Vagina (tissue), 2 donors: ENCODE measurements at regions of chr1 and their contacts with region 1.

Region 1: DNA sequence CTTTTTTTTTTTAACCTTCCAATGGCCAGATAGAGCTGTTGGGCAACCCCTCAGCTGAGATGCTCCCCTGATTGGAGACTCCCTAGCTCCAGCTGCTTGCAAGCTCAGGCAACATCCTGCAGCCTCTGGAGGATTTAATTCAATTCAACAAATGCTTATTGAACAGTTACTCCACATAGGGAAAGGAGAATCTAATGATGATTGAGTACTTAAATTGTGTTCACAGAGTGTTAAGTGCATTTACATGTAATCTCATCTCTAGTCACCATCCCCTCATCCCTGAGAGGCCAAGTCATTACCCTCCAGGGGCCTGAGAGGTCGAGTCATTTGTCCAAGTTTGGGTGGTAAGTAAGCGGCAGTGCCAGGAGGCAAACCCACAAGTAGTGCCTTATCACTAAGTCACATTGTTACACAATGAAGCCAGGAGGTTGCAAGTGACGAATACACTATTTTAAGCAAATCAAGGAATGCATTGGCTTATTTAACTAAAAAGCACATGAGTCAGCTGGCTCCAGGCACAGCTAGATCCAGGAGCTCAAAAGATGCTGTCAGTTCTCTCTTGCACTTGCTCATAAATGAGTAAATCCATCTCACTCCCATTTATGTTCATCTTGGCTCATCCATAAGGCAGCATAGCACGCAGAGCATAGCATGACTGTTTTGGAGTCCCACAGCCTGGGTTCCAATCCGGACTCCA is 64.3 kb downstream of the OPTC start:
- DNase-seq: peak in 1 of 2 donors; percentile 91
- H3K4me3 ChIP-seq: no peak overlapping the region
- H3K27ac ChIP-seq: peak overlapping the region; percentile 91
- H3K4me1 ChIP-seq: peaks cover 56% of the 10 kb centered on the region
- H3K27me3 ChIP-seq: no peaks in the 10 kb centered on the region
- CTCF ChIP-seq: peak in 1 of 3 experiments; percentile 6
- POLR2A ChIP-seq: no peak

Region 2: DNA sequence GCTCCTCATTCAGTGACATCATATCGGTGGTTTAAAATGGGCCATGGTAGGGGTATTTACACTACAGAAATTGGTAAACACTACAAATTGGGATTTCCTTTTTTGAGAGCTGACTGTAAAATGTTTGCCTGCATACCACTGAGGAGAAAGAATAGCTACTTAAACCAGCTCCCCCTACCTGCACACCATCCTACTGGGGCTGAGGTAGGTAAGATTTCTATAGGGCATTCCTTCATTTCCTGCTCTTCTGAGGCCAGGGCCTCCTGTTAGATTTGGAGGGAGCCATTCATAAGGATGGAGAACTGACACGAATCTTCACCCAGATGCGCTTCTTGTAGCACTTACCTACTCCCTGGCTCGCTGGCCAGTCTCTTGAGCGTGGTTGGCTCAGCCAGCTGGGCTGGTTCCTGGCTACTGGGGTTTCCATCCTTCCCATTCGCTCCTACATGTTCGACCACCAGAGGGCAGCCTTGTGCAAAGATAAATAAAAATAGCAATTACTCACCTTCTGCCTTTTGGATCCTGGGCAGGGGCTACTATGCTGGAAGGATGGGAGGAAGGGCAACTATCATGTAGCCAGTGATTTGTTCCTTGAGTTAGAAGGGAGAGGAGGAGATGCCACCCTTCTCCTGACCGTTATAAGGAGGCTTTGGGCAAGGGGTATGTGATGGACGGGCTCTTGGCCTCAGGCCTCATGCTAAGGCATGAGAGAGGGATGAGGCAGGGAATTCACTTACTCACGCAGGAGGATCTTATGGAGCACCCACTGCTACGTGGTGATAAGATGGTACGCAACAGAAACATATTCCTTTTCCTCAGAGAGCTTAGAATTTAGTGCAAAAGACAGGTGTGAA is 53.6 kb before region 1 on chr1:
- intact Hi-C with region 1: loop called (anchors 5 kb)
- DNase-seq: no peak
- H3K4me3 ChIP-seq: no peak overlapping the region
- H3K27ac ChIP-seq: no peak overlapping the region
- H3K4me1 ChIP-seq: peaks cover 26% of the 10 kb centered on the region
- H3K27me3 ChIP-seq: no peaks in the 10 kb centered on the region
- CTCF ChIP-seq: peak; percentile 76 to 88 (median 86)
- POLR2A ChIP-seq: no peak

Region 3: DNA sequence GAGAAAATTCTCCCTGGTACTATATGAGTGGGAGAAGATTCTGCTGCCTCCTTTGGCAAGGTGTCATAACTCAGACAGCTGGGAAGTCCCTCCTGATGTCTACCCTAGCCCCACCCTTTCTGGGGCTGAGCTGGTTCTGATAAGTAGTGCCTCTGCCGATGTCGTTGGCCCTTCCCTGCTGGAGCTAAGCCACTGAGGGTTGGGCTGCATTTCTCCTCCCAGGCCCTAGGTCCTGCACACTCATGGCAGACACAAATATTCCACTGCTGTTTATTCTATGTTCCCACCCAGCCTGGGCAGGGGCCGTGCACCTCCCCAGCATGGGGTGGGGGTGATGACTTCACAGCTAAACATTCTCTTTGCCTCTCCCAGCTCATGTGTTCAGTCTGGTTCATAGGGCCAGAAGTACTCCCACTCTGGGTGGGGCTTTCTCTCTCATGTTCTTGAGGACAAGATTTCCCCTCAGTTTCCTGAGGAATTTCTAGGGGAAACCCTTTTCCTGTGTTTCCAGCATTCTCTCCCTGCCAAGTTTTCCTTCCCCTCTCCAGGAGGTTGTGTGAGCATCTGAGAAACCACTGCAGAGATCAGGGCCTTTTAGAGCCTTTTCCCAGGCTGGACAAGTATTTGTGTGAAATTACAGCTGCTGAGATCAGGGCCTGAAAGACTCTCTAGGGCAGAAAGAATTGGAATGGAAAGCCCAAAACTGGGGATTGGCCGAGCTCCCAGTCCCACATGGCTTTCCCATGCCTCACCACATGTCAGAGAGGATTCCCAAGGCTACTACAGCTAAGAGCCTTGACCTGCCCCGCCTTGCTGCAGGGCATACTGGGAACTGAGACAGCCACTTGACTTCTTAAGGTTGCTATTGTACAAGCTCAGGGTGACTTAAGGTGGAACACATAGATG is 134.6 kb after region 1 on chr1:
- intact Hi-C with region 1: loop called (anchors 5 kb)
- DNase-seq: peak in 1 of 2 donors; percentile 96
- H3K4me3 ChIP-seq: no peak overlapping the region
- H3K27ac ChIP-seq: peak overlapping the region; percentile 87
- H3K4me1 ChIP-seq: peaks cover 75% of the 10 kb centered on the region
- H3K27me3 ChIP-seq: no peaks in the 10 kb centered on the region
- CTCF ChIP-seq: no peak
- POLR2A ChIP-seq: no peak